Activated CD8-positive, alpha-beta T cell treated with anti-CD3 and anti-CD28 coated beads for 36 hours (primary cell): ENCODE measurements at regions of chr7 and their contacts with region 1.

Region 1: DNA sequence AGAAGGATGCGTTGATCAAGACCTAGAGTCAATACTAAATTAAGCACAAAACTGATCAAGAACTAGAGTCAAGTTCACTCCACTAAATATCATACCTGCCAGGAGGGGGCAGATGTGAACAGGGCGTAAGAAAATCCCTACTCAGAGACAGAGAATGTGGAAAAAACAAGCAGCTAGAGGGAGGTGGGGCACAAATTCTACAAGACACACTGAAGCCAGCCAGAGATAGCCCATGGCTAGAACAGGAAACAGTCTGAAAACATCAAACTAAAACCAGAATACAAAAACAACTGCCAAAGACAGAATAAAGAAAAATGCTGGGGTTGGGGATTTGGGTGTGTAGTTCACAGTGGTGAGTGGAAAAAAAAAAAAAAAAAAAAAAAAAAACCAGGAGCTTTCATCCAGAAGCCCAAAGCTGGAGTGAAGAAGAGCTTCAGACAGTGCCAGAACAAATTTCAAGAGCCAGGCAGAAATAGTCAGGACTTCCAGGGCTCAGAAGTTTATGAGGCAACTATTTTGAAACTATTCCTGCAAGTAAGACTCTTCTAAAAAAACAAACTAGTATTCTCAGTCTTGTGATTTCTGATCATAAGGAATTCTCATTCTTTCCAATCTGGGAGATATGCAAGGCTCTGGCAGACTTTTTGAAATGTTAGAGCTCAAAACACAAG is 118.3 kb downstream of the CCDC71L start:
- DNase-seq: peak; percentile 70
- ATAC-seq: peak; percentile 86
- H3K4me3 Mint-ChIP-seq: no peak overlapping the region
- H3K27ac Mint-ChIP-seq: no peak overlapping the region
- H3K4me1 Mint-ChIP-seq: peaks cover 8% of the 10 kb centered on the region
- H3K27me3 Mint-ChIP-seq: peaks cover 3% of the 10 kb centered on the region
- CTCF ChIP-seq: peak; percentile 60

Region 2: DNA sequence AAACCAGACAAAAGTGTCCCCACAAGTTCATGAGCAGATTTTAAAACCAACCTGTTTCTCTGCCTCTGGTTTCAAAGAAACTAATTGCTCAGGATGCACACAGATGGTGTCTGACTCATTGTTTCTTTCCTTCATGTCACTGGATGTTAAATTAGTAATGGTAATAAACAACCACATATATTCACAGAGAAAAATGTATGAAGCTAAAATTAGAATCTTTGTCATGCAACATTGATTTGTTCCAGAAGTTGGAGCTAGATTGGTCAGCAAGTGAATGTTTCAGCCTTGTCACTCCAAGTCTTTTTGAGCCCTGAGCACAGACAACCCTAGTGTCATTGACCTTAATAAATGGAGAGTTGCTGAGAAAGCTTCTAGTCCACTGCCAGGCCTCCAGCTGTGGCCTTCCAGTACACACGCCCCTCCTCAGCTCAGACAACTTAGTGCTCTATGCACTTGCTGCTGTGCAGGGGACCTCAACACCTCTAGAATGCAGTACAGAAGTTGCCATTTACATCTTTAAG is 57.6 kb before region 1 on chr7:
- CTCF ChIA-PET with region 1: interaction called, 13 read pairs
- POLR2A ChIA-PET with region 1: no interaction called
- intact Hi-C with region 1: no loop called
- DNase-seq: peak; percentile 27
- ATAC-seq: peak; percentile 72
- H3K4me3 Mint-ChIP-seq: peak overlapping the region; percentile 16
- H3K27ac Mint-ChIP-seq: peak overlapping the region; percentile 89
- H3K4me1 Mint-ChIP-seq: peaks cover 60% of the 10 kb centered on the region
- H3K27me3 Mint-ChIP-seq: peaks cover 7% of the 10 kb centered on the region
- CTCF ChIP-seq: no peak

Region 3: GRCh38 chr7:106552645-106553445 is 10.2 kb after region 1 on chr7:
- CTCF ChIA-PET with region 1: interaction called, 12 read pairs
- POLR2A ChIA-PET with region 1: interaction called, 3 read pairs
- intact Hi-C with region 1: no loop called
- DNase-seq: no peak
- ATAC-seq: no peak
- H3K4me3 Mint-ChIP-seq: no peak overlapping the region
- H3K27ac Mint-ChIP-seq: no peak overlapping the region
- H3K4me1 Mint-ChIP-seq: no peaks in the 10 kb centered on the region
- H3K27me3 Mint-ChIP-seq: no peaks in the 10 kb centered on the region
- CTCF ChIP-seq: no peak

Region 4: GRCh38 chr7:106583706-106584690 is 41.3 kb after region 1 on chr7:
- CTCF ChIA-PET with region 1: no interaction called
- POLR2A ChIA-PET with region 1: no interaction called
- intact Hi-C with region 1: no loop called
- DNase-seq: no peak
- ATAC-seq: no peak
- H3K4me3 Mint-ChIP-seq: no peak overlapping the region
- H3K27ac Mint-ChIP-seq: no peak overlapping the region
- H3K4me1 Mint-ChIP-seq: no peaks in the 10 kb centered on the region
- H3K27me3 Mint-ChIP-seq: peaks cover 5% of the 10 kb centered on the region
- CTCF ChIP-seq: no peak

Region 5: GRCh38 chr7:106652909-106653308 is 110.2 kb after region 1 on chr7:
- CTCF ChIA-PET with region 1: interaction called, 30 read pairs
- POLR2A ChIA-PET with region 1: interaction called, 3 read pairs
- intact Hi-C with region 1: loop called (anchors 5 kb)
- DNase-seq: no peak
- ATAC-seq: no peak
- H3K4me3 Mint-ChIP-seq: no peak overlapping the region
- H3K27ac Mint-ChIP-seq: no peak overlapping the region
- H3K4me1 Mint-ChIP-seq: peaks cover 11% of the 10 kb centered on the region
- H3K27me3 Mint-ChIP-seq: no peaks in the 10 kb centered on the region
- CTCF ChIP-seq: no peak

Region 6: DNA sequence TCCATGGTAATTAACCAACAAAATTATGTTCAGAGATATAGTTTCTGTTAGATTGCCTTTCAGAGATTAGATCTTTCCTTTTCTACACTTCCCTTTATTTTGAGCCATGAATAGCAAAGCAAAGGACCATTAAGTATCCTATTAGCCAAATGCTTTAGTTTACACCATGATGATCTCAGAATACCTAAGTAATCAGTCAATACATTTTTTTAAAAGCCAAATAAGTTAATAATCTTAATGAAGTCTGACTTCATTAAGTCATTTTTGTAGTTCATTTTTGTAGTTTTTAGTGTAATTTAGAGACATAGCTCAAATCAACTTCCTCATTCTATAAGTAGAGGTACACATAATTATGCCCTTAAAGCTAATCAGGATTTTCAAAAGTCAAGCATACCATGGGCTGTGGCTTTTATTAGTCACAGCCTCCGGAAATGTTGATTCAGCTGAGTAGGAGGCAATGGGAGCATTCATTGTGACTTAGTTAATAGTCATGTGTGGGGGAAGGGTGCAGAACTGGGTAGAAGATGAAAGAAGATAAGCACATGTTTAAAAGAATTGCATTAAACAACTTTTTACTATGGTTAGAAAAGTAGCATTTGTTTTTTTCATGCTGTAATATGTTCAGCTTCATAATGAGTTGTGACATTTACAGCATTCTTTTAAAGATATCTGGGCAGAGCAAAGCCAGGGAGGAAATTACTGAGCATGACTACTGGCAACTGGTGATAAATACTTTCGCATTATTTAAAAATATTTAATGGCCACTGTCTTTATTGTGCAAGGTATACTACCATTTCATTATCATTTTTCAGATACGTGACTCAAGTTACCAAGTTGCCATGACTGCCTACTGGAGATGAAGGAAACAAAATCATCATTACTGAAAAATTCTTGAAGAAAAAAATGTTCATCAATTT is 175.5 kb after region 1 on chr7:
- CTCF ChIA-PET with region 1: no interaction called
- POLR2A ChIA-PET with region 1: no interaction called
- intact Hi-C with region 1: no loop called
- DNase-seq: peak; percentile 94
- ATAC-seq: peak; percentile 96
- H3K4me3 Mint-ChIP-seq: no peak overlapping the region
- H3K27ac Mint-ChIP-seq: no peak overlapping the region
- H3K4me1 Mint-ChIP-seq: peaks cover 15% of the 10 kb centered on the region
- H3K27me3 Mint-ChIP-seq: peaks cover 2% of the 10 kb centered on the region
- CTCF ChIP-seq: no peak

Region 7: GRCh38 chr7:107025449-107026103 is 482.9 kb after region 1 on chr7:
- CTCF ChIA-PET with region 1: no interaction called
- POLR2A ChIA-PET with region 1: no interaction called
- intact Hi-C with region 1: no loop called
- DNase-seq: no peak
- ATAC-seq: no peak
- H3K4me3 Mint-ChIP-seq: no peak overlapping the region
- H3K27ac Mint-ChIP-seq: no peak overlapping the region
- H3K4me1 Mint-ChIP-seq: no peaks in the 10 kb centered on the region
- H3K27me3 Mint-ChIP-seq: peaks cover 2% of the 10 kb centered on the region
- CTCF ChIP-seq: no peak